Psoas muscle (tissue), 8 donors: ENCODE measurements at regions of chr1 and their contacts with region 1.

Region 1: GRCh38 chr1:8913111-8913856 is 32.4 kb upstream of the CA6 start:
- DNase-seq: no peak
- ATAC-seq: no peak
- H3K4me3 ChIP-seq: no peak overlapping the region
- H3K27ac ChIP-seq: no peak overlapping the region
- H3K4me1 ChIP-seq: no peaks in the 10 kb centered on the region
- H3K27me3 ChIP-seq: no peaks in the 10 kb centered on the region
- CTCF ChIP-seq: no peak

Region 2: GRCh38 chr1:8987881-8988617 is 74.8 kb after region 1 on chr1:
- intact Hi-C with region 1: loop called (anchors 2 to 5 kb)
- DNase-seq: peak; percentile 51 to 71
- ATAC-seq: peak; percentile 59 to 76 (median 70)
- H3K4me3 ChIP-seq: no peak overlapping the region
- H3K27ac ChIP-seq: no peak overlapping the region
- H3K4me1 ChIP-seq: no peaks in the 10 kb centered on the region
- H3K27me3 ChIP-seq: no peaks in the 10 kb centered on the region
- CTCF ChIP-seq: peak; percentile 88

Region 3: GRCh38 chr1:9004700-9005394 is 91.6 kb after region 1 on chr1:
- intact Hi-C with region 1: loop called in 1 of 2 experiments (anchors 5 kb)
- DNase-seq: peak; percentile 74 to 76
- ATAC-seq: peak; percentile 80 to 89 (median 82)
- H3K4me3 ChIP-seq: no peak overlapping the region
- H3K27ac ChIP-seq: no peak overlapping the region
- H3K4me1 ChIP-seq: no peaks in the 10 kb centered on the region
- H3K27me3 ChIP-seq: no peaks in the 10 kb centered on the region
- CTCF ChIP-seq: peak; percentile 92

Region 4: DNA sequence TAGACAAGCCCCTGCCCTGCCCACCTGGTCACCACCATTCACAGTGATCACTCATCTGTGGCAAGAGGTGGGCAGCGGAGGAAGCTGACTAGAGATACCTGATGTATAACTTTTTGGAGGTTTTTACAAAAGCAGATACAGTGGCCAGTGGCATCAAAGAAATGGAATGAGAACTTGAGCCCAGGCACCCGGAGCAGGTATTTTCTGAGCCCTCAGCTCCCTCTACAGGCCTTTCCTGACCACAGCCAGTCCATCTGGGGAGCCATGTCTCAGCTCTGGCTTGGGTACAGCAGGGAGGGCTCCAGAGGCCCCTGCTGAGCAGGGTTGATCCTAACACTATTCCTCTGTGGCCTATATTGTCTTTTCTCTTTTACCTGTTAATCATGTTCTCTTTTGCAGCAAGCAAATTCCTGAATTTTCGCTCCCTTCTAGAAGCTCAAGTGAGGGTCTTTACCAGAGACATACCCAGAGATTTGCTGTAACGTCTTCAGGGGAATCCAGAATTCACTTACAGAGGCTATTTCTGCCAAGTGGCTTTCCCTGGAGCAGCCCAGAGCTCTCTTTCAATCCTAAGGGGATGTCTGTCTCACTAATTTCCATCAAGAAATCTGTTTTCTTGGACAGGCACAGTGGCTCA is 188.3 kb after region 1 on chr1:
- intact Hi-C with region 1: loop called (anchors 2 to 5 kb)
- DNase-seq: peak in 1 of 2 donors; percentile 72
- ATAC-seq: peak; percentile 75 to 87 (median 82)
- H3K4me3 ChIP-seq: no peak overlapping the region
- H3K27ac ChIP-seq: peak overlapping the region; percentile 8
- H3K4me1 ChIP-seq: peaks cover 15% of the 10 kb centered on the region
- H3K27me3 ChIP-seq: no peaks in the 10 kb centered on the region
- CTCF ChIP-seq: peak; percentile 72